Activated naive CD4-positive, alpha-beta T cell treated with anti-CD3 and anti-CD28 coated beads for 36 hours (primary cell): ENCODE measurements at regions of chr20 and their contacts with region 1.

Region 1: DNA sequence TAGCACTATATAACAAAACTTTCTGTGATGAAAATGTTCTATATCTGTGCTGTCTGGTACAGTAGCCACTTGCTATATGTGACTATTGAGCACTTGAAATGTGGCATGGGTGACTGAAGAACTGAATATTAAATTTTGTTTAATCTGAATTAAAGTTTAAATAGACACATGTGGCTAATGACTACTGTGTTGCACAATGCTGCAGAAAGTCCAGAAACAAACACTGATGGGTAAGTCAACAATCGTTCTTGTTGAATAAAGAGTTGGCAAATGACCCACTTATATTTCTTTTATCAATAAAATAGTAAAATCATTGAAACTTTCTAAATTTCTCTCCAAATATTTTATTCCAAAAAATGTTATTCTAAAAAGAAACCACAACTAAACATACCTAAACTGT is 81.8 kb downstream of the PROKR2 start:
- DNase-seq: no peak
- H3K4me3 Mint-ChIP-seq: no peak overlapping the region
- H3K27ac Mint-ChIP-seq: no peak overlapping the region
- H3K4me1 Mint-ChIP-seq: no peaks in the 10 kb centered on the region
- H3K27me3 Mint-ChIP-seq: peaks cover 27% of the 10 kb centered on the region

Region 2: GRCh38 chr20:5150226-5151076 is 84.5 kb before region 1 on chr20:
- CTCF ChIA-PET with region 1: no interaction called
- intact Hi-C with region 1: no loop called
- DNase-seq: no peak
- H3K4me3 Mint-ChIP-seq: no peak overlapping the region
- H3K27ac Mint-ChIP-seq: no peak overlapping the region
- H3K4me1 Mint-ChIP-seq: peaks cover 56% of the 10 kb centered on the region
- H3K27me3 Mint-ChIP-seq: no peaks in the 10 kb centered on the region

Region 3: DNA sequence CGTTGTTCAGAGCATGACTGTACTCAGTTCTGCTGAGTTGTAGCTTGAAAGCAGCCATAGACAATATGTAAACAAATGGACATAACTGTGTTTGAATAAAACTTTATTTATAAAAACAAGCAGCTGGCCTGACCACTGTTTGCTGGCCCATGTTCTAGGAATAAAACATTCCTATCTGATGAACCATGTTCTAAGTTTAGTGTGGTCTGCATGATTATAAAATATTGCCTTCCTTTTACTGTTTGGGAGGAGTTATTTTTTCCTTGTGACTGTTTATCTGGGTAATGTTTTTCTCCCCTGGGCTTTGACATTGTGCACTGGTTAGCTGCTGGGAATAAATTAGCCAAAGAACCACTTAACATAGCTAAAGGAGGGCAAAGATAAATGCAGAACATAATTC is 53.0 kb before region 1 on chr20:
- CTCF ChIA-PET with region 1: no interaction called
- intact Hi-C with region 1: no loop called
- DNase-seq: no peak
- H3K4me3 Mint-ChIP-seq: no peak overlapping the region
- H3K27ac Mint-ChIP-seq: no peak overlapping the region
- H3K4me1 Mint-ChIP-seq: no peaks in the 10 kb centered on the region
- H3K27me3 Mint-ChIP-seq: no peaks in the 10 kb centered on the region

Region 4: DNA sequence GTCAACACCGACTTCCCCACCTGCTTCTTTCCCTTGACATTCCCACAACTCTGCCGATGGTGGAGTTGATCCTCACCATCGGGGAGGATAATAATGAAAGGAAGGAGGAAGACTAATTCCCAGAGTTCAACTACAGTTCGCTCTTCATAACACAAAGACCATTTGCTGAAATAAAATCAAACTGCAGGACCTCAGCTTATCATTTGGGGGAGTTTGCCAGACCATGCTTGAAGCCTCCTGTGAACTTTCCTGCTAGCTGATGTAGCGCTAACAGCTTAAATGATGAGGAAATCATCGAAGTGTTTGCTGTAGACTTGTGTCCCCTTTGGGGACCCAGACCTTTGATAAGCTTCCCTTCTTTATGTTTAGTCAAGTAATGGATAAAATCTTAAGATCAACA is 55.6 kb after region 1 on chr20:
- CTCF ChIA-PET with region 1: no interaction called
- intact Hi-C with region 1: loop called (anchors 5 kb)
- DNase-seq: no peak
- H3K4me3 Mint-ChIP-seq: no peak overlapping the region
- H3K27ac Mint-ChIP-seq: no peak overlapping the region
- H3K4me1 Mint-ChIP-seq: no peaks in the 10 kb centered on the region
- H3K27me3 Mint-ChIP-seq: peaks cover 11% of the 10 kb centered on the region